ENCODE measurements at regions of chr7 and their contacts with region 1.

Region 1: GRCh38 chr7:75971961-75972763 is 22.2 kb downstream of the TMEM120A start:
- DNase-seq: no peak
- H3K4me3 ChIP-seq: no peak overlapping the region
- H3K27ac ChIP-seq: no peak overlapping the region
- H3K4me1 ChIP-seq: no peaks in the 10 kb centered on the region
- H3K27me3 ChIP-seq: no peaks in the 10 kb centered on the region
- CTCF ChIP-seq: peak; percentile 23 to 53 (median 46); a peak in 2 of 4 replicates
- EP300 ChIP-seq: no peak
- POLR2A ChIP-seq: no peak
- RAD21 ChIP-seq: peak; percentile 31 to 45; a peak in 3 of 4 replicates

Region 2: GRCh38 chr7:75872073-75872782 is 99.9 kb before region 1 on chr7:
- CTCF ChIA-PET with region 1: interaction called, 17 read pairs
- POLR2A ChIA-PET with region 1: interaction called, 3 read pairs
- DNase-seq: no peak
- H3K4me3 ChIP-seq: no peak overlapping the region
- H3K27ac ChIP-seq: no peak overlapping the region
- H3K4me1 ChIP-seq: no peaks in the 10 kb centered on the region
- H3K27me3 ChIP-seq: no peaks in the 10 kb centered on the region
- CTCF ChIP-seq: no peak
- EP300 ChIP-seq: no peak
- POLR2A ChIP-seq: no peak
- RAD21 ChIP-seq: no peak

Region 3: GRCh38 chr7:75957012-75957736 is 15.0 kb before region 1 on chr7:
- CTCF ChIA-PET with region 1: interaction called, 11 read pairs
- POLR2A ChIA-PET with region 1: interaction called, 4 read pairs
- DNase-seq: peak in 1 of 2 experiments; percentile 68
- H3K4me3 ChIP-seq: no peak overlapping the region; a peak in 1 of 8 replicates
- H3K27ac ChIP-seq: no peak overlapping the region
- H3K4me1 ChIP-seq: peaks cover 2 to 11% (median 4%) of the 10 kb centered on the region in 4 experiments
- H3K27me3 ChIP-seq: no peaks in the 10 kb centered on the region
- CTCF ChIP-seq: no peak
- EP300 ChIP-seq: peak in 1 of 2 experiments; percentile 55; a peak in 1 of 3 replicates
- POLR2A ChIP-seq: no peak
- RAD21 ChIP-seq: no peak

Region 4: DNA sequence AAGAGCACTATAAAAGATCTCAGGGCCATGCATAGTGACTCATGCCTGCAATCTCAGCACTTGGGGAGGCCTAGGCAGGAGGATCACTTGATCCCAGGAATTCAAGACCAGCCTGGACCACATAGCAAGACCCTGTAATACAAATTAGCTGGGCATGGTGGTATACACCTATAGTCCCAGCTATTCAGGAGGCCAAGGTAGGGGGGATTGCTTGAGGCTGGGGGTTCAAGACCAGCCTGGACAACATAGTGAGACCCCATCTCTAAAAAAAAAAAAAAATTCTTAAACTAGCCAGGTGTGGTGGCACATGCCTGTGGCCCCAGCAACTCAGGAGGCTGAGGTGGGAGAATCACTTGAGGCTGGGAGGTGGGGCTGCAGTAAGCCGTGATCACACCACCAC is 59.8 kb after region 1 on chr7:
- CTCF ChIA-PET with region 1: no interaction called
- POLR2A ChIA-PET with region 1: no interaction called
- DNase-seq: no peak
- H3K4me3 ChIP-seq: no peak overlapping the region
- H3K27ac ChIP-seq: no peak overlapping the region
- H3K4me1 ChIP-seq: no peaks in the 10 kb centered on the region
- H3K27me3 ChIP-seq: no peaks in the 10 kb centered on the region
- CTCF ChIP-seq: no peak
- EP300 ChIP-seq: no peak
- POLR2A ChIP-seq: no peak
- RAD21 ChIP-seq: no peak

Region 5: DNA sequence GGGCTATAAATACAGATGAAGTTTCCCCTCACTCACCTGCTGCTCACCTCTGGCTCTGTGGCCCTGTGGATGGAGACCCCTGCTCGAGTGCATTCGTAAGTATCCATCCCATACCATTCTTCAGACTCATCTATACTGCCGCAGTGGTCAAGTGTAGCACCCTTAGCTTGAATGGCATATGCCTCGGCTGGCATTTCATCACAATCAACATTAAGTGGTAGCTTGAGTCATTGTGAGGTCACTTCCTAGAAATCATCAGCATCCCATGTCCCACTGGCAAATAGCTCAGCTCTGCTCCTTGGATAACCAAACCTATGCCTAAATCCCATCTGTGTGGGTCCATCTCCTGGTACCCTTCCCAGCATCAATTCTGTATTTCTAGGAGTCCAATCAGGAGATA is 113.9 kb after region 1 on chr7:
- CTCF ChIA-PET with region 1: no interaction called
- POLR2A ChIA-PET with region 1: no interaction called
- DNase-seq: no peak
- H3K4me3 ChIP-seq: no peak overlapping the region
- H3K27ac ChIP-seq: no peak overlapping the region
- H3K4me1 ChIP-seq: no peaks in the 10 kb centered on the region
- H3K27me3 ChIP-seq: no peaks in the 10 kb centered on the region
- CTCF ChIP-seq: no peak
- EP300 ChIP-seq: no peak
- POLR2A ChIP-seq: no peak
- RAD21 ChIP-seq: no peak

Measured in H1 (cell line).